ENCODE measurements at regions of chr15 and their contacts with region 1.

Region 1: DNA sequence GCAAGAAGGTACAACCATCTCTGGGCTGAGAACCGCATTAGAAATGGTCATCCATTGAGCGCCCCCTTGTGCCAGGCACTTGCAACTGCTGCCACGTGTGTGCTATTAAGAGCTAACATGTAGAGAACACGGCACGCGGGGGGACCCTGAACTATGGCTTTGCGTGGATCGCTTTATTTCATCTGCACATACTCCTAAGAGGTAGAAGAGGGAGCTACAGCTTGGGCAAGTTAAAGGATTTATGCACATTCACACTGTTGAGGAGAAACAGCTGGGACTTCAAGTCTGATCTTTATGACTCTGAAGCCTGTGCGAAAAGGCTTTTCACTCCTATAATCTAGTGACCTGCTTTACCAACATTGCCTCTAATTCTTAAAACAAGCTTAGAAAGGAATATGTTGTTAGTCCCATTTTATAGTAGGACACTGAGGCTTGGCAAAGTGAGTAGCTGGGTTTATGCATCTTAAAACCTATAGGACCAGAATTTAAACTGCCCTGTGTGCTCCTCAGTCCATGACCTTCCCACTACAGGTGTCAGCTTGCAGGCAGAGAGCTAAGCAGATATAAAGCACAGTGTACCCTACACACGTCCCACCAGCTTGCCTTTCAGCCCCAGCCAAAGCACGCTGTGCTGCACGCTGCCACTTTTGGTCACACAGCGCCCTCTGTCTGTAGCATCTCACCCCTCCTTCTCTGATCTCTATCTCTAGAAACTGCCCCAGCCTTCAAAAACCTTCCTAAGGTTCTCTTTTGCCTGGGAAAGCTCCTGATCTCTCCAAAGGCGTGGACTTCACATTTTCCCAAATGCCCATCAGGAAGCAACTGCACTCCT is 57.8 kb downstream of the STARD5 start:
- DNase-seq: peak; percentile 59 to 96 (median 86)

Region 2: GRCh38 chr15:80977627-80978036 is 288.5 kb before region 1 on chr15:
- intact Hi-C with region 1: loop called (anchors 1 kb)
- DNase-seq: peak in 8 of 10 donors; percentile 26 to 95 (median 72)

Region 3: GRCh38 chr15:81060907-81061306 is 205.3 kb before region 1 on chr15:
- intact Hi-C with region 1: no loop called
- DNase-seq: no peak

Region 4: GRCh38 chr15:81155375-81156218 is 110.6 kb before region 1 on chr15:
- intact Hi-C with region 1: loop called (anchors 1 kb)
- DNase-seq: peak in 2 of 10 donors; percentile 12 to 29

Region 5: DNA sequence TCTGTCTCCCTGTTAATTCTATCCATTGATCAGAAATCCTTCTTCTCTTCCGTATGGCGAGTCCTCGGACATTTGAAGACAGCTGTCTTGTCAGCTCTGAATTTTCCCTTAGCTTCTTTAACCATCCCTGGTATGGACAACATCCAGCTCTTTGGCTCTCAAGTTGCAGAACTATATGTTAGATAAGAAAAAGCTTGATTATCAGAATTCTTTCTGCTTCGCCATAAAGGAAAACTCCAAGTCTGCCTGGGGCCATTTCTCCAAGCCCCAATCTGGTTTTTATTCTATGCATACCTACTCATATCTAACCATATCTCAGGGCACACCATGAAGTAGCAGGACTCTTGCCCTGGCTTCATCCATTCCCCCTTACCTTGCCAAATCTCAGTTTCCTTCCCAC is 323.5 kb after region 1 on chr15:
- intact Hi-C with region 1: no loop called
- DNase-seq: no peak

Region 6: DNA sequence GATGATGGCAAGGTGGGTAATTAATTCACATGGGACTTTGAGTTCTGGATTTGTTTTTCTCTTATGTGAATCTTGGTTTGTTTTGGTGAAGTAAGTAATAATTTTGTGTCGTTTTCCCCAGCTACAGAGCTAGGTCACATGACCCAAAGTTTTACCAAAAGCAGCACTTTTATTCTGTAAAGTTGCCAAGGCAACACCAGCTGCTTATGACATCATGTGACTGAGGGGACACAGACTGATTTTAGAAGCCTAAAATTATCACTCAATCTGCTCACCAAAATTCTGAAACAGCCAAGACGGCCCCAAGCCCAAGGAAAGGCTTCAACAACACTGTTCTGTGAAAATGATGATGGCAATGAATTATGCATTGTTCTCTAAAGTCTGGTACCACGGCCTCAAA is 715.7 kb after region 1 on chr15:
- intact Hi-C with region 1: no loop called
- DNase-seq: peak in 2 of 10 donors; percentile 7 to 11

Measured in posterior cingulate gyrus (tissue), 11 donors.